ENCODE measurements at regions of chr5 and their contacts with region 1.

Region 1: DNA sequence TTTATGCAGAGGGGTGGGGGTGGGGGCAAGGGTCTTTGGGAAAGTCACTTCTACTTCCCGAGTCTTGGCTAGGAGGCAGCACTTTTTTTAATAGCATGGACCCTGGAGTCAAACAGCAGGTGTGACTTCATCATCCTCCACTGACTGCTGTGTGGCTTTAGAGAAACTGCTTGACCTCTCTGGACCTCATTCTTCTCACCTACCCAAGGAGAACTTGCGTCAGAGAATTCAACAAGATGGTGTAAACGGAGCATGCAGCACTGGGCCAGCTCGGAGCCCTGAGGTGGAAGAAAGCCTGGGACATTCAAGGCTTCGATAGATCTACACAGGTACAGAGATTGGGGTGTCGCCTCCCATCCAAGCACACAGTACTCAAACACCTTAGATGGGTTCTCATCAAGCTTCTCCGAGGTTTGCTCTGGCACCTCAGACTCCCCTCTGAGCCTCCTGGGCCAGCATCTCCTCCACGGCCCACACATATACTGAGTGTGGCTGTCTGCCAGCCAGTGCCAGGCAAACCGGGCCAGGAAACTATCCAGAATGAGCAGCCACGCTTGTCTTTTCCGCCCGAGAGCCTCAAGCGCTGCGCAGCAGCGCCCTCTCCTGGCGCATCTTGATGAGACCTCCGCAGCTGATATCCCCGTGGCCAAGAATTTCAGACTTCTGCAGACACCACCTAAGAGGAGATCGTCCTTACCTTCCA is 4.6 kb upstream of the SLC25A48 start:
- DNase-seq: no peak
- ATAC-seq: peak; percentile 75
- H3K4me3 ChIP-seq: no peak overlapping the region
- H3K27ac ChIP-seq: no peak overlapping the region
- H3K4me1 ChIP-seq: no peaks in the 10 kb centered on the region
- H3K27me3 ChIP-seq: peaks cover 0 to 8% of the 10 kb centered on the region in 2 experiments; a peak in 2 of 4 replicates
- CTCF ChIP-seq: peak; percentile 62 to 76 (median 75)
- EP300 ChIP-seq: no peak
- POLR2A ChIP-seq: no peak
- RAD21 ChIP-seq: peak; percentile 55

Region 2: DNA sequence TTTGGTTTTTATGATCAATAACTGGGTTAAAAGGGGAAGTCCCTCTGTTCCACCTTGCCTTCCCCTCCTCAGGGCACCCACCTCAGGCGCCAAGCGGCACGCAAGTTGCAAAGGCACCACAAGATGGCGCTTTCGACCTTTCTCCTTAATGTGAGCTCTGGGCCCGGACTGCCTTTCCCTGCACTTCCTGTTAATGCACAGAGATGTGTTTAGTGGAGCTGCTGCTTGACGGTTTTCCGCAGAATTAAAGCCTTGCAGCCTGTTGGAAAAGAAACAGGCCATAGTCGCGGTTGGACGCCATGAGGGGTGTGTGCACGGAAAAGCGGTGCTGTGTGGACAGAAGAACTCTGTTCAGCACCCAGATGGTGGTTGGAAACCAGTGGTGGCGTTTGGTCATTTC is 269.0 kb before region 1 on chr5:
- CTCF ChIA-PET with region 1: interaction called, 40 read pairs
- POLR2A ChIA-PET with region 1: no interaction called
- RAD21 ChIA-PET with region 1: interaction called, 26 read pairs
- SMC1A ChIA-PET with region 1: interaction called, 5 read pairs
- in situ Hi-C with region 1: loop called (anchors 5 kb)
- intact Hi-C with region 1: loop called (anchors 1 kb)
- DNase-seq: peak; percentile 21
- ATAC-seq: peak; percentile 99
- H3K4me3 ChIP-seq: no peak overlapping the region
- H3K27ac ChIP-seq: no peak overlapping the region
- H3K4me1 ChIP-seq: no peaks in the 10 kb centered on the region
- H3K27me3 ChIP-seq: peaks cover 3% of the 10 kb centered on the region in 2 experiments; a peak in 3 of 4 replicates
- CTCF ChIP-seq: peak; percentile 78 to 87 (median 85)
- EP300 ChIP-seq: no peak
- POLR2A ChIP-seq: no peak
- RAD21 ChIP-seq: peak; percentile 70

Region 3: GRCh38 chr5:135615581-135616260 is 214.1 kb before region 1 on chr5:
- CTCF ChIA-PET with region 1: no interaction called
- POLR2A ChIA-PET with region 1: no interaction called
- RAD21 ChIA-PET with region 1: no interaction called
- SMC1A ChIA-PET with region 1: no interaction called
- in situ Hi-C with region 1: no loop called
- intact Hi-C with region 1: no loop called
- DNase-seq: no peak
- ATAC-seq: no peak
- H3K4me3 ChIP-seq: no peak overlapping the region
- H3K27ac ChIP-seq: no peak overlapping the region
- H3K4me1 ChIP-seq: no peaks in the 10 kb centered on the region
- H3K27me3 ChIP-seq: no peaks in the 10 kb centered on the region; a peak in 2 of 4 replicates
- CTCF ChIP-seq: no peak
- EP300 ChIP-seq: no peak
- POLR2A ChIP-seq: no peak
- RAD21 ChIP-seq: no peak

Measured in GM12878 (cell line).